Ascending aorta (tissue), 2 donors: ENCODE measurements at regions of chr12 and their contacts with region 1.

Region 1: GRCh38 chr12:85920324-85920947 is 46.3 kb downstream of the NTS start:
- DNase-seq: no peak
- H3K4me3 ChIP-seq: no peak overlapping the region
- H3K27ac ChIP-seq: no peak overlapping the region
- H3K4me1 ChIP-seq: no peaks in the 10 kb centered on the region
- H3K27me3 ChIP-seq: no peaks in the 10 kb centered on the region
- CTCF ChIP-seq: peak; percentile 21 to 63 (median 48)

Region 2: GRCh38 chr12:84874125-84874824 is 1046.2 kb before region 1 on chr12:
- intact Hi-C with region 1: loop called (anchors 10 kb)
- DNase-seq: no peak
- H3K4me3 ChIP-seq: no peak overlapping the region
- H3K27ac ChIP-seq: no peak overlapping the region
- H3K4me1 ChIP-seq: no peaks in the 10 kb centered on the region
- H3K27me3 ChIP-seq: no peaks in the 10 kb centered on the region
- CTCF ChIP-seq: peak; percentile 47 to 67 (median 59)

Region 3: DNA sequence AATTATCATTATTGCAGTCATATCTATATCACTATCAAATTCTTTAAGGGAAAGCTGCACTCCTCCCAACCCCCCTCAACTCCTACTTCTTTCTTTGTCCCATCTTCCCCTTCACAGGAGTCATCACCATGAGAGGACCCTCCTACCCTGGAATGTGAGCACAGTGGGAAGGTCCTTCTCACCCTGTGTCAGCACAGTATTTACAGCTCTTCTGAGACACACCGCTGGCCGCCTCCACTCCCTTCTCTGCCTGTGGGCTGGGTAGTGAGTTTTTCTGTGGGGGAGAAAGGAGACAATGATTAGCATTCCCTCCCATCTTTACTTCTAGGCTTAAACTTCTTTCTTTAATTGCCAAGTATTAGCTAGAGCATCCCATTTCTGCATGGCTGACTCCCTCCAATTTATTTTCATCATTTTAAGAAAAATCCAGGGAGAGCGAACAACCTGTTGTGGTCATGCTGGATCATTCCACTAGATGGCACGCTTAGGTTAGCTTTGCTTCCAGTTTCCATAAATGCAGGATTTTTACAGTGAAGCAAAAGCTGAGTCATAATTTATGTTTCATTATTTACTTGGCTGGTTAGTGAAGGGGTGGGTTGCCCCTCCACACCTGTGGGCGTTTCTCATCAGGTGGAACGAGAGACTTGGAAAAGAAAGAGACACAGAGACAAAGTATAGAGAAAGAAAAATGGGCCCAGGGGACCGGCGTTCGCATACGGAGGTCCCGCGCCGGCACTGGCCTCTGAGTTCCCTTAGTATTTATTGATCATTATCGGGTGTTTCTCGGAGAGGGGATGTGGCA is 451.9 kb before region 1 on chr12:
- intact Hi-C with region 1: loop called (anchors 1 kb)
- DNase-seq: peak in 1 of 2 donors; percentile 65
- H3K4me3 ChIP-seq: peak overlapping the region; percentile 50 to 65
- H3K27ac ChIP-seq: no peak overlapping the region
- H3K4me1 ChIP-seq: no peaks in the 10 kb centered on the region
- H3K27me3 ChIP-seq: no peaks in the 10 kb centered on the region
- CTCF ChIP-seq: peak; percentile 45 to 76 (median 73)

Region 4: GRCh38 chr12:86018361-86018760 is 97.9 kb after region 1 on chr12:
- intact Hi-C with region 1: no loop called
- DNase-seq: no peak
- H3K4me3 ChIP-seq: no peak overlapping the region
- H3K27ac ChIP-seq: no peak overlapping the region
- H3K4me1 ChIP-seq: no peaks in the 10 kb centered on the region
- H3K27me3 ChIP-seq: no peaks in the 10 kb centered on the region
- CTCF ChIP-seq: no peak

Region 5: GRCh38 chr12:87848248-87848868 is 1927.9 kb after region 1 on chr12:
- intact Hi-C with region 1: loop called (anchors 10 kb)
- DNase-seq: no peak
- H3K4me3 ChIP-seq: no peak overlapping the region
- H3K27ac ChIP-seq: no peak overlapping the region
- H3K4me1 ChIP-seq: no peaks in the 10 kb centered on the region
- H3K27me3 ChIP-seq: no peaks in the 10 kb centered on the region
- CTCF ChIP-seq: peak; percentile 32 to 88 (median 78)